Panc1 (cell line): ENCODE measurements at regions of chr10 and their contacts with region 1.

Region 1: DNA sequence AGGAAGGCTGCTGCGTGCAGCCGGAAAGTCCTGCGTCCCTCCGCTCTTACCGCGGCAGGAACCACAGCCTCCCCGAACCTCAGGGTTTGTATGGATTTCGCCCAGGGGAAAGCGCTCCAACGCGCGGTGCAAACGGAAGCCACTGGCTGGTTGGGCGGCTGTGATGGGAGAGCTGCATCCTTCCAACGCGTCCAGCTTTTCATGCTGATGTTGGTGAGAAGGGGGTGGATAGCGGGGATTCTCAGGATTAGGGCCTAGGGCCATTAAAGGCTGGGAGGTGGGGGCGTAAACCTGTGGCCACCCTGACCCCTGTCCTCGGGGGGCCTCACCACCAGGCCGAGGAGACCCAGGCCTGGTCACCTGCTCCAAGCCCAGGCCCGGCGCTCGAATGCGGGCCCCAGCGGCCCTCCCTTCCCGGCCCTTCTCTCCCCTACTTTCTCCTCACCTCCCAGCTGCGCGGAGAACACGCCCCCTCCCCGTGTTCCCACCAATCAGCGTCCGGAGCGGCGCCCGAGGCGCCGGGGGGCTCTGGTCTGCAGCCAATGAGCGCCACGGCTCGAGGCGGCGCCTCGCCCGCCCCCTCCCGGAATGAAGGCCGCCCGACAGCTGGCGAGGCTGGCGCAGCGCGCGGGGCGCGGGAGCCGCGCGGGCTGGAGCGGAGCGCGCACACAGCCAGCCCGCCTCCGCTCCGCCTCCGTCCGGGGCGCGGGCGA is 458 bp upstream of the NANOS1 start:
- DNase-seq: no peak
- ATAC-seq: peak; percentile 77
- H3K4me3 ChIP-seq: peak overlapping the region; percentile 43 to 61
- H3K27ac ChIP-seq: peak overlapping the region; percentile 80
- H3K4me1 ChIP-seq: peaks cover 49% of the 10 kb centered on the region
- H3K27me3 ChIP-seq: no peaks in the 10 kb centered on the region
- CTCF ChIP-seq: no peak; the same call in 1 of the 2 replicates

Region 2: GRCh38 chr10:118568327-118568848 is 460.7 kb before region 1 on chr10:
- CTCF ChIA-PET with region 1: interaction called, 8 read pairs
- POLR2A ChIA-PET with region 1: no interaction called
- in situ Hi-C with region 1: no loop called
- intact Hi-C with region 1: loop called (anchors 5 kb)
- DNase-seq: peak; percentile 17
- ATAC-seq: peak; percentile 64
- H3K4me3 ChIP-seq: peak overlapping the region in 1 of 2 experiments; percentile 28; a peak in 1 of 4 replicates
- H3K27ac ChIP-seq: no peak overlapping the region
- H3K4me1 ChIP-seq: no peaks in the 10 kb centered on the region
- H3K27me3 ChIP-seq: no peaks in the 10 kb centered on the region
- CTCF ChIP-seq: peak; percentile 87

Region 3: GRCh38 chr10:118742782-118743181 is 286.3 kb before region 1 on chr10:
- CTCF ChIA-PET with region 1: interaction called, 3 read pairs
- POLR2A ChIA-PET with region 1: no interaction called
- in situ Hi-C with region 1: no loop called
- intact Hi-C with region 1: loop called (anchors 5 kb)
- DNase-seq: no peak
- ATAC-seq: no peak
- H3K4me3 ChIP-seq: no peak overlapping the region
- H3K27ac ChIP-seq: peak overlapping the region; percentile 3; the same call in 1 of the 2 replicates
- H3K4me1 ChIP-seq: peaks cover 41% of the 10 kb centered on the region
- H3K27me3 ChIP-seq: no peaks in the 10 kb centered on the region
- CTCF ChIP-seq: no peak

Region 4: GRCh38 chr10:118754720-118755480 is 274.2 kb before region 1 on chr10 and contains the start of gene CACUL1:
- CTCF ChIA-PET with region 1: no interaction called
- POLR2A ChIA-PET with region 1: no interaction called
- in situ Hi-C with region 1: no loop called
- intact Hi-C with region 1: loop called (anchors 5 kb)
- DNase-seq: peak; percentile 95
- ATAC-seq: peak; percentile 98
- H3K4me3 ChIP-seq: peak within 1 kb of the TSS; percentile 88
- H3K27ac ChIP-seq: peak within 1 kb of the TSS; percentile 73
- H3K4me1 ChIP-seq: peaks cover 15% of the 10 kb centered on the region
- H3K27me3 ChIP-seq: no peaks in the 10 kb centered on the region
- CTCF ChIP-seq: no peak
- total RNA-seq, gene CACUL1: 44.1 TPM

Region 5: GRCh38 chr10:119070395-119071165 is 41.5 kb after region 1 on chr10:
- CTCF ChIA-PET with region 1: no interaction called
- POLR2A ChIA-PET with region 1: interaction called, 11 read pairs
- in situ Hi-C with region 1: no loop called
- intact Hi-C with region 1: no loop called
- DNase-seq: no peak
- ATAC-seq: no peak
- H3K4me3 ChIP-seq: no peak overlapping the region
- H3K27ac ChIP-seq: no peak overlapping the region
- H3K4me1 ChIP-seq: peaks cover 14% of the 10 kb centered on the region; the same call in 1 of the 2 replicates
- H3K27me3 ChIP-seq: no peaks in the 10 kb centered on the region
- CTCF ChIP-seq: no peak

Region 6: GRCh38 chr10:119165171-119166110 is 136.4 kb after region 1 on chr10 and contains the start of gene SFXN4:
- CTCF ChIA-PET with region 1: no interaction called
- POLR2A ChIA-PET with region 1: interaction called, 15 read pairs
- in situ Hi-C with region 1: no loop called
- intact Hi-C with region 1: no loop called
- DNase-seq: no peak
- ATAC-seq: peak; percentile 95
- H3K4me3 ChIP-seq: peak within 1 kb of the TSS; percentile 63 to 87
- H3K27ac ChIP-seq: peak within 1 kb of the TSS; percentile 93
- H3K4me1 ChIP-seq: peaks cover 23% of the 10 kb centered on the region
- H3K27me3 ChIP-seq: no peaks in the 10 kb centered on the region
- CTCF ChIP-seq: no peak
- total RNA-seq, gene SFXN4: 67.0 TPM